ENCODE measurements at regions of chr3 and their contacts with region 1.

Region 1: DNA sequence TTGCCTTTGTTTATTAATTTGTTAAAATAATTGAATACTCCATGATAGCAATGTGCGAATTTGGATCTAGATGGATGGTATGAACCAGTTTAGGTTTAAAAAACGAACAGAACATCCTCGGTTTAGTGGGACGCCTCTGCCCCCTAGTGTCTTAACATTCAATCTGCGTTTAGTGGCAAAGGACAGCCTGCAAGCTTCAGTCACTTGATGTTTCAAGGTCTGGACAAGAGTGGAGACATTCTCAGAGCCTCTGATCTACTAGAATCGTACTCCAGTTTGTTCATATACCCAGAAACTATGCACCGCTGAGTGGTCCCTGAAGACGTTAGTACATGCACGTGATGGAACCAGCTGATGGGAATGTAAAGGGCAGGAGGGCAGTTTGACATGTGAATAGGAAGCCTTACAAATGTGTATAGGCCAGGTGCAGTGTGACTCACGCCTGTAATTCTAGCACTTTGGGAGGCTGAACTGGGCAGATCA is 17.8 kb upstream of the ATP13A4 start:
- DNase-seq: peak; percentile 50
- CTCF ChIP-seq: peak; percentile 65

Region 2: DNA sequence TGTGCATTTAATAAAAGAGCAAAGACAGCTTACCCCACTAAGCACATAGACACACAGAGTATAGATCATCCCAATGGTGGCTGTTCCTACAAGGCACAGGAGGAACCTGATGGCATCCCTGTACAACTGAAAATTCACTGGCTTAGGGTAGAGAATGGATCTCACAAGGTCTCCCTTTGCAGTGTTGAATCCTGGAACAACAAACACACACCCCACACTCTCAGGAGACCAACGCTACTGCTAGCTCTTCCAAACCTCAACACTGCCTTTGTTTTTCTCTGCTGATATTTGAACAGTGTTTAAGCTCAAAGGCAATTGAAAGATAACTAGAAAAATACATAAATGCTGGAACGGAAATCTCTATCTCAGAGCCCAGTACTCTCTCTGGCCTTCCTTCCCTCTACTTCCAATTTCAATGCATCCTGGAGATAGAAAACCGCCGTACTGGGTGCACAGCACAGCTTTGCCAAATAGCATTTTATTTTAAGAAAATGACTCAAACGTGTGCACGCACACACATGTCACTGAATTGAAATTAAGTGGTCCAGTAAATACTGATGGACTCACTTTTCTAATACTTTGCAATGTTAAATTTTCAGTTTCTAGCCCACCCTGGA is 106.4 kb before region 1 on chr3:
- CTCF ChIA-PET with region 1: interaction called, 18 read pairs
- POLR2A ChIA-PET with region 1: no interaction called
- DNase-seq: no peak
- CTCF ChIP-seq: no peak

Measured in GM10248 (cell line).